ENCODE measurements at regions of chr2 and their contacts with region 1.

Region 1: DNA sequence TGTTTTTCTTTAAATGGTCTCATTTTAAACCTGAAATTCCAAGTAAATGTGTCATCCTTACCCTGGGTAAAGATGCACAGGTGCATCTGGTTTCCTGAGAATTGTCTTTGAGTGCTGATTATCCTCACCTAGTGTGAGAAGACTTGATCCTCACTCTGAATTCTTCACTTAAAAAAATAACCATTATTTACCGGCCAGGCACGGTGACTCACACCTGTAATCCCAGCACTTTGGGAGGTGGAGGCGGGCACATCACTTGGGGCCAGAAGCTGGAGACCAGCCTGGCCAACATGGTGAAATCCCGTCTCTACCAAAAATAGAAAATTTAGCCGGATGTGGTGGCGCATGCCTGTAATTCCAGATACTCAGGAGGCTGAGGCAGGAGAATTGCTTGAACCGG is 9.9 kb upstream of the WNT6 start:
- DNase-seq: no peak
- H3K4me3 ChIP-seq: no peak overlapping the region
- H3K27ac ChIP-seq: no peak overlapping the region
- H3K27me3 ChIP-seq: peaks cover 0 to 44% (median 10%) of the 10 kb centered on the region in 45 donors
- CTCF ChIP-seq: no peak

Region 2: DNA sequence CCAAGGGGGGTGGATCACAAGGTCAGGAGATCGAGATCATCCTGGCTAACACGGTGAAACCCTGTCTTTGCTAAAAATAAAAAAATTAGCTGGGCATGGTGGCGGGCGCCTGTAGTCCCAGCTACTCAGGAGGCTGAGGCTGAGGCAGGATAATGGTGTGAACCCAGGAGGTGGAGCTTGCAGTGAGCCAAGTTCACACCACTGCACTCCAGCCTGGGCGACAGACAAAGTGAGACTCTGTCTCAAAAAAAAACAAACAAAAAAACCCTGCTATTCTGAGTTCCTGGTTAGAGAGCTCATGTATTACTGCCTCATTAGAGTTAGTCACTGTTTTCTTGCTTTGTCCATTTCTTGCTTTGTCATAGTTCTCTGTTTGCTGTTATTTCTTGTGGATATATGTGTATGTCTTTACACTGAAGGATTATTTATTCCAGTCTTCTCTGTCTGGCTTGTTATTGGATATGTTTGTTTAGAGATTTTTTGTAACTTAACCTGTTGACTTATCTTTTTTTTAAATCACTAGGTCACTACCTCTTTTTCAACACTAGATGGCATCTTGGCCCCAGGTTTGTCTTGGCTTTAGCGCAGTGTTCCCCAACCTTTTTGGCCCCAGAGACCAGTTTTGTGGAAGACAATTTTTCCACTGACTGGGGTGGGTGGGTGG is 122.1 kb before region 1 on chr2:
- intact Hi-C with region 1: loop called in 1 of 2 experiments (anchors 5 kb)
- DNase-seq: no peak
- H3K4me3 ChIP-seq: no peak overlapping the region
- H3K27ac ChIP-seq: no peak overlapping the region
- H3K27me3 ChIP-seq: no peaks in the 10 kb centered on the region
- CTCF ChIP-seq: peak in 50 of 56 donors; percentile 16 to 52 (median 32)